GM10248 (cell line): ENCODE measurements at regions of chr7 and their contacts with region 1.

Region 1: GRCh38 chr7:156640949-156641485 is 443 bp downstream of the RNF32 start:
- DNase-seq: no peak
- CTCF ChIP-seq: no peak

Region 2: DNA sequence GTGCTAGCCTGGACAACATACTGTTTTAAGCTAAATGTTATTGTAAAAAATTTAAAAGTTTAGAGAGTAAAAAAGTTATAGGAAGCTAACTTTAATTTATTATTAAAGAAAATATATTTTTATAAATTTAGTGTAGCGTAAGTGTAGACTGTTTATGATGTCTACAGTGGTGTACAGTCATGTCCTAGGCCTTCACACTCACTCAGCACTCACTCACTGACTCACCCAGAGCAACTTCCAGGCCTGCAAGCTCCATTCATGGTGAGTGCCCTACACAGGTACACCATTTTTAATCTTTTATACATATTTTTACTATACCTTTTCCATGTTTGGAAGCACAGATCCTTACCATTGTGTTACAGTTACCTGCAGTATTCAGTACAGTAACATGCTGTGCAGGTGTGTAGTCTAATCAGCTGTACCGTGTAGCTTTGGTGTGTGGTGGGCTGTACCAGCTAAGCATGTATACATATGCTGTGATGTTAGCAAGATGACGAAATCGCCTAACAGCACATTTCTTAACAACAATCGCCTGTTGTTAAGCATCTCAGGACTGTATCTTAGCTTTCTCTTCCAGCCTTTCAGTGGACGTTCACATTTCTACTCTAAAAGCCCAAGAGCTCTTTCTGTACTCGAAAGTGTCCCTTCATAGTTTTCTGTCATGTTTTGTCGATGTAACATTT is 12.0 kb after region 1 on chr7:
- CTCF ChIA-PET with region 1: interaction called, 13 read pairs
- POLR2A ChIA-PET with region 1: no interaction called
- DNase-seq: no peak
- CTCF ChIP-seq: no peak

Region 3: GRCh38 chr7:157684157-157684908 is 1043.3 kb after region 1 on chr7:
- CTCF ChIA-PET with region 1: no interaction called
- POLR2A ChIA-PET with region 1: no interaction called
- DNase-seq: no peak
- CTCF ChIP-seq: no peak